ENCODE measurements at regions of chr20 and their contacts with region 1.

Region 1: GRCh38 chr20:60057123-60057801 is 99.0 kb downstream of the CDH26 start:
- DNase-seq: peak; percentile 61
- ATAC-seq: peak; percentile 40 to 77 (median 60)
- H3K4me3 ChIP-seq: peak overlapping the region in 1 of 10 donors; percentile 50
- H3K27ac ChIP-seq: peak overlapping the region in 3 of 10 donors; percentile 5 to 90 (median 14)
- H3K4me1 ChIP-seq: peaks cover 3 to 76% (median 27%) of the 10 kb centered on the region in 9 donors
- H3K27me3 ChIP-seq: peaks cover 0 to 12% (median 0%) of the 10 kb centered on the region in 7 donors
- CTCF ChIP-seq: peak; percentile 76 to 93 (median 88)

Region 2: GRCh38 chr20:59955132-59955796 is 102.0 kb before region 1 on chr20:
- intact Hi-C with region 1: loop called in 1 of 10 experiments (anchors 10 kb)
- DNase-seq: no peak
- ATAC-seq: peak in 5 of 8 donors; percentile 37 to 59 (median 53)
- H3K4me3 ChIP-seq: no peak overlapping the region
- H3K27ac ChIP-seq: no peak overlapping the region
- H3K4me1 ChIP-seq: peaks cover 0 to 9% (median 0%) of the 10 kb centered on the region in 9 donors
- H3K27me3 ChIP-seq: no peaks in the 10 kb centered on the region
- CTCF ChIP-seq: peak in 7 of 9 donors; percentile 29 to 54 (median 39)

Region 3: DNA sequence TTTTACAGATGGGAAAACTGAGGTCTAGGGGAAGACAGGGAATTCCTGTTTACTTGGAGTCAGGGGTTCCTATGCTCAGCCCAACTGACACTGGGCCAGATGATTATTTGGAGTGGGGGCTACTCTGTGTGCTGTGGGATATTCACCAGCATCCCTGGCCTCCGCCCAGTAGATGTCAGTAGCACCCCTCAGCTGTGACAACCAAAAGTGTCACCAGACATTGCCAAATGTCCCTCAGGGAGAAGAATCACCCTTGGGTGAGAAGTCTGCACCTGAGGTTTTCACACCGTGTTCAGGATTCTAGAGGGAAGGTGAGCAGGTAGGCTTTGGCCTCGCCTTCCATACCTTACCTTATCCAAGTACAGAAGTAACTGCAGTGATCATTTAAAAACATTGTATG is 71.4 kb before region 1 on chr20:
- intact Hi-C with region 1: loop called in 1 of 10 experiments (anchors 10 kb)
- DNase-seq: peak in 1 of 2 donors; percentile 26
- ATAC-seq: peak in 6 of 8 donors; percentile 56 to 79 (median 68)
- H3K4me3 ChIP-seq: no peak overlapping the region
- H3K27ac ChIP-seq: no peak overlapping the region
- H3K4me1 ChIP-seq: peaks cover 0 to 24% (median 0%) of the 10 kb centered on the region in 9 donors
- H3K27me3 ChIP-seq: no peaks in the 10 kb centered on the region
- CTCF ChIP-seq: peak in 8 of 9 donors; percentile 11 to 45 (median 30)

Region 4: GRCh38 chr20:60262967-60263603 is 205.8 kb after region 1 on chr20:
- intact Hi-C with region 1: loop called in 6 of 10 experiments (anchors 5 to 10 kb)
- DNase-seq: no peak
- ATAC-seq: no peak
- H3K4me3 ChIP-seq: no peak overlapping the region
- H3K27ac ChIP-seq: no peak overlapping the region
- H3K4me1 ChIP-seq: peaks cover 0 to 4% (median 0%) of the 10 kb centered on the region in 9 donors
- H3K27me3 ChIP-seq: peaks cover 0 to 54% (median 11%) of the 10 kb centered on the region in 7 donors
- CTCF ChIP-seq: peak; percentile 17 to 81 (median 65)

Region 5: DNA sequence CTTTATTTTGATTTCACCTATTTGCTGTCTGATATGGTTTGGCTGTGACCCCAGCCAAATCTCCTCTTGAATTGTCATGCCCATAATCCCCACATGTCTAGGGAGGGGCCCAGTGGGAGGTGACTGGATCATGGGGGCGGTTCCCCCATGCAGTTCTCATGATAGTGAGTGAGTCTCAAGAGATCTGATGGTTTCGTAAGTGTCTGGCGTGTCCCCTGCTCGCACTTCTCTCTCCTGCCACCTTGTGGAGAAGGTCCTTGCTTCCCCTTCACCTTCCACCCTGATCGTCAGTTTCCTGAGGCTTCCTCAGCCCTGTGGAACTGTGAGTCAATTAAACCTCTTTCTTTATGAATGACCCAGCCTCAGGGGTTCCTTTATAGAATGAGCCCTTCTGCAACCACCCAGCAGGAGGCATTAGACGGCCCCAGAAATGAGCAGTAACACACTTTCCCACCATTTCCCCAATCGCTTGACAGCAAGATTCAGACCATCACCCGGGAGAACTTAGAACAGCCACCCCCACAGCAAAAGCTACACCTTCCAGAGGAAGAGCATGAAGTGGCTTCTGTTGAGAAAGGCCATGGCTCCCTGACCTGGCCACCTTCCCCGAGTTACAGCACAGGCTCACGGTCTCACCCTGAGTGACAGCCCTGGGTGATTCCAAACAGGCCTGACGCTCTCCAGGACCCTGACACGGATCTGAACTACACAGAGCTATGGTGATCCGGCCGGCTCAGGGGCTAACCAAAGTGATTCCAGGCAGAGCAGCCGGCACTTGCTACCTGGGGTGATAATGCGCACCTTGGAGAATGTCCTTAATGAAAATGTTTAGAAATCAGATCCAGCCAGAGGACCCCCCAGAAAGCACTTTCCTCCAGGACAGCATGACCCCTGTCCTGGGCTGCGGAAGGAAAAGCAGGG is 1063.6 kb after region 1 on chr20:
- intact Hi-C with region 1: loop called in 2 of 10 experiments (anchors 5 to 10 kb)
- DNase-seq: peak in 1 of 2 donors; percentile 34
- ATAC-seq: peak in 3 of 8 donors; percentile 50 to 63 (median 57)
- H3K4me3 ChIP-seq: no peak overlapping the region
- H3K27ac ChIP-seq: no peak overlapping the region
- H3K4me1 ChIP-seq: peaks cover 0 to 2% (median 0%) of the 10 kb centered on the region in 9 donors
- H3K27me3 ChIP-seq: peaks cover 0 to 23% (median 0%) of the 10 kb centered on the region in 7 donors
- CTCF ChIP-seq: peak in 8 of 9 donors; percentile 19 to 65 (median 53)

Region 6: GRCh38 chr20:61220160-61220559 is 1162.9 kb after region 1 on chr20:
- intact Hi-C with region 1: loop called in 1 of 10 experiments (anchors 10 kb)
- DNase-seq: no peak
- ATAC-seq: no peak
- H3K4me3 ChIP-seq: no peak overlapping the region
- H3K27ac ChIP-seq: no peak overlapping the region
- H3K4me1 ChIP-seq: peaks cover 0 to 6% (median 0%) of the 10 kb centered on the region in 9 donors
- H3K27me3 ChIP-seq: peaks cover 0 to 43% (median 21%) of the 10 kb centered on the region in 7 donors
- CTCF ChIP-seq: no peak

Region 7: DNA sequence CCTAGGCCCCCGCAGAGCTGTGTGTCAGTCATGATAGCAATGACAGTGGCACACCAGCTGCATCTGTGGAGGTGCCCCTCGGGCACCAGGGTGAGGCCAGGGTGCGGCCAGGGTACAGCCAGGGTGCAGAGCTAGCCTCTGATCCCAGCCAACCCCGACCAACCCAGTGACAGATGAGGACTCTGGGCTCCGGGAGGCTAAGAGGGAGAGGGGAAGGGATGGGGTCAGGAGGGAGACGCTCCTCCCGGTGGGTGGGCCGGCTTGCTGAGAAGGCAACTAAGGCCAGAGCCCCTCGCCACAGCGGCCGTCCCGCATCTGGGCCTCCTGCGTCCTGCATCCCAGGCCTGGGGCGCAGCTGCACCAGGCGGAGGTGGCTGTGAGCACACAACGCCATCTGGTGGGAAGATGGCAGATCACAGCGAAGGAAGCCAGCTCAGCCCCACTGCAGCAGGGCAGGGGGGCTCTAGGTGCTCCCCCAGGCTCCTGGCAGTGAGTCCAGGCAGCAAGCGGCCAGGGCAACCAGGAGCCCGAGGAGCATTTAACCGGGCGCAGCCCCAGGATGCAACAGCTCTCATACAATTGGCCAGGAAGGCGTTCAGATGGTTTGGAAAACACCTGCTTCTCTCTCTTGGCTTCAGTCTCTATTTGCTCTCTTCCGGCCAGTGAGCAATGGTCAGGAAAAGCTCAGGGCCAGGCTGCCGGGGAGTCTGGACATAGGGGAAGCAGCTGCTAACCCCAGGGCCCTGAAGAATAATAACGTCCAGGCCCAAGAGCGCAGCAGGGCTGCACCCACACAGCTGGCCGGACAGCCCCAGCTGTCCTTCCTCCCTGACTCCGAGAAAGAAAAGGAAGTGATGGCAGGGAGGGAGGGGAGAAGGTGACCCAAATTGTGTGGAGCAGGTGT is 1839.0 kb after region 1 on chr20:
- intact Hi-C with region 1: loop called in 4 of 10 experiments (anchors 10 kb)
- DNase-seq: peak in 1 of 2 donors; percentile 39
- ATAC-seq: peak in 6 of 8 donors; percentile 43 to 74 (median 63)
- H3K4me3 ChIP-seq: no peak overlapping the region
- H3K27ac ChIP-seq: no peak overlapping the region
- H3K4me1 ChIP-seq: peaks cover 0 to 7% (median 0%) of the 10 kb centered on the region in 9 donors
- H3K27me3 ChIP-seq: peaks cover 0 to 59% (median 26%) of the 10 kb centered on the region in 7 donors
- CTCF ChIP-seq: peak; percentile 31 to 74 (median 70)

Measured in heart right ventricle (tissue), 16 donors.